ENCODE measurements at regions of chr16 and their contacts with region 1.

Region 1: DNA sequence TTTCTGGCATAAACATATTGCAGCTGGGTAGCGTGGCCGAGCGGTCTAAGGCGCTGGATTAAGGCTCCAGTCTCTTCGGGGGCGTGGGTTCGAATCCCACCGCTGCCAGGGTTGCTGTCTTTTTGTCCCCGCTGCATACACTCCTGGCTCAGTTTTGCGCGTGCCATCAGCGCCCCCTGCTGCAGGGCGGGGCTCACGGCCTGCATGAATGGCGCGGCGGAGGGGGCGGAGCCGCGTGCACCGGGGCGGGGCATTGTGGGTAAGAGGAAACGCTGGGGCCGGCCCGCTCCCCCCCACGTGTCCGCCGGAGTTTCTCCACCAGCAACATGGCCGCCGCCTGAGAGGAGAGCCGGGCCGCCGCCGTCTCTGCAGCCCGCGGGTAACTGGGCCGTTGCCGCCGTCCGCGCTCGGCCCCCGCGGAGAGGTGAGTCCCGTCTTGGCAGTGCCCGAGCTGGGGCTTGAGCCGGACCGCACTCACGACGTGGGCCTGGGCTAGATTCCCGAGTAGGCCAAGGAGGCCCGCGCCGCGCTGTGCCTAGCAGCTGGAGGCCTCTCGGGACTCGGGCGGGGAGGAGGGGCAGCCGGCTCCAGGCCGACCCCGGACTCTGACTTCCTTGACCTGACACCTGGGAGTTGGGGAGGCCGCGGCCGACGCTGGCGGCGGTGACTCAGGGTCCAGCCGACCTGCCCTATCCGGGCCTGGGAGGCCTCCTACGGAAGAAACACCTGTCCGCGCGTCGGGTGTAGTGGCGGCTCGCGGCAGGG is at the start of gene POLR3E:
- DNase-seq: peak; percentile 100
- H3K4me3 Mint-ChIP-seq: peak within 1 kb of the TSS; percentile 94
- H3K27ac Mint-ChIP-seq: peak within 1 kb of the TSS; percentile 98
- H3K4me1 Mint-ChIP-seq: peaks cover 41% of the 10 kb centered on the region
- H3K27me3 Mint-ChIP-seq: peaks cover 3% of the 10 kb centered on the region
- total RNA-seq, gene POLR3E: 52.4 to 54.3 TPM

Region 2: GRCh38 chr16:22206013-22206841 is 91.1 kb before region 1 on chr16 and contains the start of gene EEF2K:
- CTCF ChIA-PET with region 1: interaction called, 48 read pairs
- POLR2A ChIA-PET with region 1: interaction called, 3 read pairs
- DNase-seq: peak; percentile 83
- H3K4me3 Mint-ChIP-seq: peak within 1 kb of the TSS; percentile 93
- H3K27ac Mint-ChIP-seq: peak within 1 kb of the TSS; percentile 83
- H3K4me1 Mint-ChIP-seq: peaks cover 33% of the 10 kb centered on the region
- H3K27me3 Mint-ChIP-seq: no peaks in the 10 kb centered on the region
- total RNA-seq, gene EEF2K: 21.9 to 23.8 TPM

Region 3: DNA sequence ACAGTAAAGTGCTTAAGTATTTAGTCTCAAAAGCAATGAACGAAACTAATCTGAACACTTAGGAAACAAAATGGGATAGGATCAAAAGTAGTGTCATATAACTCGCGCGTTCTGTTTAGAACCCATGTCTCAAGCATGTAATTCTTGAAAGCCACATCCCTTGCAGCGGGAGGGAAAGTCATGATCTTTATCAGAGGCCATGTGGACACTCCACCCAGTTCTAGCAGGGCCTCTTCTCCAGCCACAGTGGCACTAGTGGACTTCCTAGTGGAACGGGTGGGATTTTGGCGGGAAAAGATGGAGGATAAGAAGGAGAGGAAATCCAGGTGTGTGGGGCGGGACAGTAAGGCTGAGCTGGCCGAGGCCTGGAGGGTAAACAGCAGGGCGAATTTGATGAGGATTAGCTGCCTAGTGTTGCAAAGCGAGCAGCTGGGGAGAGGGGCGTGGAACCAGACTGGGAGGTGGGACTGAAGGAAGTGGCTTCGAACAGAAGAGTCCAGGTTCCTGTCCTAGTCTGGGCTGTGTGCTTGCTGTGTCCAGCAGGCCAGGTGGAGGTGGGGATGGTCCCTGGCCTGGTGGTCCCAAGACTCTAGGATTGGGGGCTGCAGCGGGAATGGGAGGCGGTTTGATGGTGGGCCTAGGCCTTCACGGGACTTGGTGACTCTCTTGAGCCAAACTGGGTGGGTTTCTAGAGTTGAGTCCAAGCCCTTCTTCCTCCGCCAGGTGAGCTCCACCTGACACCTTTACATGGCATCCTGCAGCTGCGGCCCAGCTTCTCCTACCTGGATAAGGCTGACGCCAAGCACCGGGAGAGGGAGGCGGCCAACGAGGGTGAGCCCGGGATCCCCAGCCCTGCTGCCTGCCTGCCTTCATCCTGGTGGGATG is 15.8 kb after region 1 on chr16:
- CTCF ChIA-PET with region 1: interaction called, 19 read pairs
- POLR2A ChIA-PET with region 1: no interaction called
- DNase-seq: no peak
- H3K4me3 Mint-ChIP-seq: no peak overlapping the region
- H3K27ac Mint-ChIP-seq: no peak overlapping the region
- H3K4me1 Mint-ChIP-seq: no peaks in the 10 kb centered on the region
- H3K27me3 Mint-ChIP-seq: no peaks in the 10 kb centered on the region

Region 4: GRCh38 chr16:22318690-22319358 is 21.5 kb after region 1 on chr16:
- CTCF ChIA-PET with region 1: interaction called, 19 read pairs
- POLR2A ChIA-PET with region 1: no interaction called
- DNase-seq: peak; percentile 71
- H3K4me3 Mint-ChIP-seq: no peak overlapping the region
- H3K27ac Mint-ChIP-seq: no peak overlapping the region
- H3K4me1 Mint-ChIP-seq: peaks cover 7% of the 10 kb centered on the region
- H3K27me3 Mint-ChIP-seq: no peaks in the 10 kb centered on the region

Region 5: DNA sequence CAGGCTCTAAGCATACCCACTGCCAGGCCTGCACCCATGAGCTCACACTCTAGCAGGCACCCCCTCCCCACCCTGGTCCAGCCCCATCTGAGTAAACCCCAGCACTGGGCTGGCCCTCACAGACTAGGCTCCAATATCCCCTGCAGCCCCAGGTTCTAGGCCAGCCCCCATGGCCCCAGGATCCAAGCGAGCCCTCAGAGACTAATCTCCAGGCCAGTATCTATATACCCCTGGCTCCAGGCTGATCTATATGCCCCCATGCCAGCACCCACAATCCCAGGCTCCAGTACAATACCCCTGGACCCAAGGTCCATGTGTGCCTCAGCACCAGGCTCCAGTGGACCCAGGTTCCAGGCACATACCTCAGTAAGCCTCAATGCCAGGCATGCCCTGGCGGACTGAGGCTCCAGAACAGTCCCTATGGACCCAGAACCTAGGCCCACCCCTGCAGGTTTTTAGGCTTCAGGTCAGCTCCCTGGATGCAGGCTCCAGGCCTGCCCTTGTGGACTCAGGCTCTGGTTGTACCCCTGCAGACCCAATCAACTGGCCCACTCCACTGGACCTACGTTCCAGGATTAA is 38.5 kb after region 1 on chr16:
- CTCF ChIA-PET with region 1: no interaction called
- POLR2A ChIA-PET with region 1: no interaction called
- DNase-seq: no peak
- H3K4me3 Mint-ChIP-seq: no peak overlapping the region
- H3K27ac Mint-ChIP-seq: no peak overlapping the region
- H3K4me1 Mint-ChIP-seq: peaks cover 15% of the 10 kb centered on the region
- H3K27me3 Mint-ChIP-seq: no peaks in the 10 kb centered on the region

Region 6: GRCh38 chr16:22357635-22357971 is 60.3 kb after region 1 on chr16:
- CTCF ChIA-PET with region 1: no interaction called
- POLR2A ChIA-PET with region 1: no interaction called
- DNase-seq: no peak
- H3K4me3 Mint-ChIP-seq: peak overlapping the region; percentile 37
- H3K27ac Mint-ChIP-seq: peak overlapping the region; percentile 96
- H3K4me1 Mint-ChIP-seq: peaks cover 76% of the 10 kb centered on the region
- H3K27me3 Mint-ChIP-seq: no peaks in the 10 kb centered on the region